Posterior vena cava (tissue), 2 donors: ENCODE measurements at regions of chr2 and their contacts with region 1.

Region 1: GRCh38 chr2:228628682-228629081 is 447.2 kb upstream of the SPHKAP start:
- DNase-seq: no peak

Region 2: GRCh38 chr2:227643990-227644551 is 984.6 kb before region 1 on chr2:
- intact Hi-C with region 1: loop called in 1 of 2 experiments (anchors 5 kb)
- DNase-seq: no peak

Region 3: DNA sequence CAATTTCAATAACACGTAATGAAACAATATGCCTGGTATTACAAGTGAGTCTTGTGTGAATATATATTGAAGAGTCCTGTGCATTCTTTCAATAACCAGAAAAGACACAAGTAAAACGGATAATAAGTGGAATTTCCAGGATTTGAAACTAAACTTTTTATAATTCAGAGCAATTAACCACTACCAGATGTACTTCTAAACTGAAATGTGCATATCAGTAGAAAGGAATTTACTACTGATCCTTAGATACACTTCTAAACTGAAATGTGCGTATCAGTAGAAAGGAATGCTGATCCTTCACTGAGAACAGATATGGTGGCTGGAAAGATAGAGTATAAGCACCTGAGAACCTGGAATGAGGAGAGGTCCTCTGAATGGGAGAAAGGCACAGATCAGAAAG is 23.7 kb after region 1 on chr2:
- intact Hi-C with region 1: no loop called
- DNase-seq: no peak

Region 4: GRCh38 chr2:228669690-228670089 is 41.0 kb after region 1 on chr2:
- intact Hi-C with region 1: loop called in 1 of 2 experiments (anchors 2 kb)
- DNase-seq: no peak